ENCODE measurements at regions of chr16 and their contacts with region 1.

Region 1: DNA sequence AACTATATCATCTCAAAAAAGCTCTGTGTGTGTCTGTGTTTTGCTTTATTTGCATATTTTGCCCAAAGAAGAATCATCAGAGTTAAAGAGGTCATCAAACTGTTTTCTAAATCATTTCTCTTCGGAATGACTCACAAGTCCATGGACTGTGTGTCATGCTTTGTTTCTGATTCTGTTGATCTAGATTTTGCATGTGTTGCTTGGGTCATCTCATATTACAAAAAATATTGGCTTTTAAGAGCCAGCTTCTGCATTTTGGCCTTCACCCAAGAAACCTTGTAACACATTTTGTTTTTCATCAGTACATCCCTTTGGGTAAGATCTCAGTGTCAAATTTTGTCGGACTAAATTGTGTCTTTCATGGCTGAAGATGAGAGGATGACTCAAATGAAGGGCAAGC is 471.1 kb upstream of the HSBP1 start:
- DNase-seq: no peak
- ATAC-seq: no peak
- H3K4me3 ChIP-seq: no peak overlapping the region
- H3K27ac ChIP-seq: no peak overlapping the region
- H3K4me1 ChIP-seq: no peaks in the 10 kb centered on the region
- H3K27me3 ChIP-seq: no peaks in the 10 kb centered on the region
- CTCF ChIP-seq: no peak
- EP300 ChIP-seq: no peak
- POLR2A ChIP-seq: no peak
- RAD21 ChIP-seq: no peak

Region 2: DNA sequence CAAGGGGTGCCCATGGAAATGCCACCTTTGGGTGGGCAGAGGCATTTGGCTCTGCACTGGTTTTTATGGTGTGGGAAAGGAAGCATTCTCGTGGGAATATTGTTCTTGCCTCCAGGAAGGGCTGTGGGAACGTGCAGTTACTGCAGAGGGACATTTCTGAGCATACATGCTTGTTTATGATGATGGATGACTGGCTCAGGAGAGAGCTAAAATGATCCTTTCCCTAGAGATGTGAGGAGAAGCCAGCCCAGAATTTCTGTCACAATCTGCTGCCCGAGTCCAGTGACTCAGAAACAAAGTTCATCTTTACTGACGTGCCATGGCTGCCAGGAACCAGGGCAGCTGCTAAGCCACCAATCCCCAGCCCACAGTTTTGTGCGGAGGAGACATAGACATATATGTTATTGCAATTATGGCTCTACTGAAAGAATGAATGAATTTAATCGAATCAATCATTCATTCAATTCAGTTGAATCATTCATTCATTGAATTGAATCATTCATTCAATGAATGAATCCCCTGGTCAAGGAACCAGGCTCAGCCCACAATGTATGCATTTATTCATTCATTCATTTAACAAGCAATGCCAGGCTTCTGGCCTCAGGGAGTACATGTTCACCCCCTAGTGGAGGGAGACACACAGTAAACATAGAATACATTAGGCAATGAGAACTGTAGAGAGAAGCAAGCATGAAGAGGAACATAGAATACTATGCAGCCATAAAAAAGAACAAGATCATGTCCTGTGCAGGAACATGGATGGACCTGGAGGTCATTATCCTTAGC is 56.8 kb after region 1 on chr16:
- CTCF ChIA-PET with region 1: no interaction called
- POLR2A ChIA-PET with region 1: no interaction called
- RAD21 ChIA-PET with region 1: no interaction called
- SMC1A ChIA-PET with region 1: interaction called, 3 read pairs
- in situ Hi-C with region 1: no loop called
- intact Hi-C with region 1: loop called (anchors 10 kb)
- DNase-seq: no peak
- ATAC-seq: no peak
- H3K4me3 ChIP-seq: no peak overlapping the region
- H3K27ac ChIP-seq: no peak overlapping the region
- H3K4me1 ChIP-seq: no peaks in the 10 kb centered on the region
- H3K27me3 ChIP-seq: no peaks in the 10 kb centered on the region
- CTCF ChIP-seq: 0 out of 6 replicates have a peak, but pooled peaks of 1 of the 3 experiments have one; percentile 6
- EP300 ChIP-seq: no peak
- POLR2A ChIP-seq: no peak
- RAD21 ChIP-seq: no peak